AG04450 (cell line): ENCODE measurements at regions of chr6 and their contacts with region 1.

Region 1: GRCh38 chr6:110053395-110054240 is 75.5 kb downstream of the GPR6 start:
- DNase-seq: peak; percentile 24
- H3K4me3 ChIP-seq: no peak overlapping the region
- H3K27ac ChIP-seq: no peak overlapping the region
- H3K27me3 ChIP-seq: peaks cover 15% of the 10 kb centered on the region
- CTCF ChIP-seq: peak; percentile 82

Region 2: GRCh38 chr6:109406196-109406595 is 647.4 kb before region 1 on chr6:
- CTCF ChIA-PET with region 1: no interaction called
- POLR2A ChIA-PET with region 1: no interaction called
- DNase-seq: no peak
- H3K4me3 ChIP-seq: no peak overlapping the region
- H3K27ac ChIP-seq: no peak overlapping the region
- H3K27me3 ChIP-seq: peaks cover 6% of the 10 kb centered on the region
- CTCF ChIP-seq: no peak

Region 3: GRCh38 chr6:109526905-109527628 is 526.6 kb before region 1 on chr6:
- CTCF ChIA-PET with region 1: interaction called, 12 read pairs
- POLR2A ChIA-PET with region 1: no interaction called
- DNase-seq: peak; percentile 23
- H3K4me3 ChIP-seq: no peak overlapping the region
- H3K27ac ChIP-seq: no peak overlapping the region
- H3K27me3 ChIP-seq: peaks cover 2% of the 10 kb centered on the region
- CTCF ChIP-seq: peak; percentile 68

Region 4: DNA sequence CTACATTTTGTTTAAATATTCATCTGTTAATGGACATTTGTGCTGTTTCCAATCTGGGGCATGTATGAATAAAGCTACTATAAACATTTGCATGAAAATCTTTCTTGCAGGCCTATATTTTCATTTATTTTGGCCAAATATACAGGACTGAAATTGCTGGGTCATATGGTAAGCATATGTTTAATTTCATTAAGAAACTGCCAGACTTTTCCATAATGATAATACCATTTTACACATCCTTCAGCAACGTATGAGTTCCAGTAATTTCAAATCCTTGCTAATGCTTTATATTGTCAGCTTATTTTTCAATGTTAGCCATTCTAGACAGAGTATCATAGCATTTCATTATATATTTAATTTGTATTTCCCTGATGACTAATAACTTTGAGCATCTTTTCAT is 24.5 kb before region 1 on chr6:
- CTCF ChIA-PET with region 1: no interaction called
- POLR2A ChIA-PET with region 1: no interaction called
- DNase-seq: no peak
- H3K4me3 ChIP-seq: no peak overlapping the region
- H3K27ac ChIP-seq: no peak overlapping the region
- H3K27me3 ChIP-seq: peaks cover 7% of the 10 kb centered on the region
- CTCF ChIP-seq: no peak